Activated T-helper 1 cell treated with anti-CD3 and anti-CD28 coated beads, Interleukin-12 subunit alpha, Interleukin-12 subunit beta, Interleukin-2, Interleukin-4 antibody, amounts not matched to agents 30 ng/mL and 10 ng/mL and 1 ng/mL, durations not matched to agents 14 hours and 24 hours and 36 hours (primary cell): ENCODE measurements at regions of chr3 and their contacts with region 1.

Region 1: GRCh38 chr3:128725932-128726690 is at the start of gene RAB7A:
- DNase-seq: peak; percentile 94
- H3K4me3 Mint-ChIP-seq: peak within 1 kb of the TSS; percentile 99
- H3K27ac Mint-ChIP-seq: peak within 1 kb of the TSS; percentile 93
- H3K4me1 Mint-ChIP-seq: peaks cover 56% of the 10 kb centered on the region
- H3K27me3 Mint-ChIP-seq: no peaks in the 10 kb centered on the region
- total RNA-seq, gene RAB7A: 318 and 329 TPM in 2 replicates

Region 2: DNA sequence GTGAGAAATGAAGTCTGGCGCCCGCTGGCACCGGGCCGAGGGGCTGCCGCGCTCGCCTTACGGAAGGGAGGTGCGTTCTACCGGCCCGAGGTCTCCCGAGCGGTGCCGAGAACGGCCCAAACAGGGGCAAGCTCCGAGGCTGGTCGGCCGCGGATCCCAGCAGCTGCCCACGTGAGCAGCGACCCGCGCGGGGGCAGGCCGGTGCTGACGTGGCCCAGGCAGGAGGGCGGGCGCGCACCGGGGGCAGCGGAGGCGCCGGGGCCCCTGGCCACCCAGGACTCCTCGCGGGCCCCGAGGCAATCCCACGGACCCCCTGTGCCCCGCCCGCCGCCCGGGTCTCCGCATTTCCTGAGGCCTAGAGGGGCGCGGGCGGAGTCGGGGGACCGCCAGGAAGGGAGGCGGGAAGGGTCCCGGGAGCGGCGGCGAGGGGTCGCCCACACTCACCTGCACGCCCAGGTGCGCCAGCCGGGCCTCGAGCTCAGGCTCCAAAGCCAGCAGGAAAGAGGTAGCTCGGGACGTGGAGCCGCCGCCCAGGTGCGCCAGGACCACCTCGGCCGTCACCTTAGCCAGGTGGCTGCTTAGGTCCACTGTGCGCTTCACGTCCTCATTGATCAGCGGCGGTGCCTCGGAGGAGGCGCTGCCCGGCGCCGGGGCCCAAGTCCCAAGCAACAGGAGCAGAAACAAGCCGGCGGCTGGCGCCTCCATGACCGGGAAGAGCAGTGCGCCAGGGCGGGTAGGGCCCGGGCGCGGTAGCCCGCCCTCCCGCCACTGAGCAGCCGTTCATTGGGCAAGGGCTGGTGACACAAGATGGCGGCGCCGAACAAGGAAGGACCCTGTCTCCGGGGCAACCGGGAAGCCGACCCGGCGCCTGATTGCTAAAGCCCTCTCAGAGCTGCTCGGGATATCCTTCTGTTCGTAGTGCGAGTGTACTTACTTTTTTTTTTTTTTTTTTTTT is 75.7 kb before region 1 on chr3 and contains the start of gene RPN1:
- intact Hi-C with region 1: loop called (anchors 1 kb)
- DNase-seq: peak; percentile 94
- H3K4me3 Mint-ChIP-seq: peak within 1 kb of the TSS; percentile 90
- H3K27ac Mint-ChIP-seq: peak within 1 kb of the TSS; percentile 92
- H3K4me1 Mint-ChIP-seq: peaks cover 26% of the 10 kb centered on the region
- H3K27me3 Mint-ChIP-seq: no peaks in the 10 kb centered on the region
- total RNA-seq, gene RPN1: 190 and 194 TPM in 2 replicates

Region 3: DNA sequence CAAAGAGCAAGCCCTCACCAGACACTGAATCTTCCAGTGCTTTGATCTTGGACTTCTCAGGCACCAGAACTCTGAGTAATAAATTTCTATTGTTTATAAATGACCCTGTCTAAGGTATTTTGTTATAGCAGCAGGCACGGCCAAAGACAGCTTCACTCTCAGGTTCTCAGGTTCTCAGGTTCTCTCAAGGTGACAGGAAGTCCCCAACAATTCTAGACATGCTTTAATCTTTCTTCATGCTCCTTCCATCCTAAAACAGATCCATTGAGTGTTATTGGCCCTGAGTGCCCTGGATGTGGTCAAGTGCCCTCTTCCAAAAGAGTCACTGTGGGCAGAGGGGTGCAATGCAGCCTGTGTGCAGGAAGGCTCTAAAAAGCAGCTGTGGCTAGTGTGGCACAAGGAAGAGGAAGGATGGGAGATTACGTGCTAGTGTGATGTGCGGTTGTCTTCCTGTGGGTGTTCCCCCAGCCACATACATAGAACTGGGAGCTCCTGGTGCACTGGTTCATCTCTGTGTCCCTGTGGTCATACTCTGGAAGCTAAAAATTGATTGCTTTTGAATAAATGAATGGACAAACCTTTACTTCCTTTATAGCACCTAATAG is 11.1 kb before region 1 on chr3:
- intact Hi-C with region 1: loop called (anchors 1 kb)
- DNase-seq: peak; percentile 37
- H3K4me3 Mint-ChIP-seq: no peak overlapping the region
- H3K27ac Mint-ChIP-seq: peak overlapping the region; percentile 77
- H3K4me1 Mint-ChIP-seq: peaks cover 18% of the 10 kb centered on the region
- H3K27me3 Mint-ChIP-seq: peaks cover 2% of the 10 kb centered on the region

Region 4: GRCh38 chr3:128787256-128788240 is 61.4 kb after region 1 on chr3:
- intact Hi-C with region 1: loop called (anchors 1 kb)
- DNase-seq: no peak
- H3K4me3 Mint-ChIP-seq: peak overlapping the region; percentile 70
- H3K27ac Mint-ChIP-seq: peak overlapping the region; percentile 97
- H3K4me1 Mint-ChIP-seq: peaks cover 83% of the 10 kb centered on the region
- H3K27me3 Mint-ChIP-seq: no peaks in the 10 kb centered on the region